Keratinocyte (primary cell): ENCODE measurements at regions of chr2 and their contacts with region 1.

Region 1: DNA sequence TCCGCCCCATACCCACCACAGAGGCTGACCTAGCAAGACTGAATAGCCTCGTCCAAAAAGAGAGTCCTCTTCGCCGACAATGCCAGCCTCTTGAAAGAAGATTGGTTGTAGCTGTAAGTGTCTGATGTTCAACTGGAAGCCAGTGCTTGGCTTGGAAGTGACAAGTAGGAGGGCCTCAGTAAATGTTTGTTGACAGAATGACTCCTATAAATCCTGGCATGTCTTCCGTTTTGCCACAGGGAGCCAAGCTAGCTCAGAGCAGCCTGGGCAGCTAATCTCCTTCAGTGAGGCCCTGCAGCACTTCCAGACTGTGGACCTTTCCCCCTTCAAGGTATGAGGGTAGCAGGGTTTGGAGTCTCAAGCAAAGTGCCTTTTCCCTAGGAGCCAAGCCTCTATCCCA is 14.9 kb downstream of the ELMOD3 start:
- DNase-seq: no peak
- H3K4me3 ChIP-seq: no peak overlapping the region
- H3K27ac ChIP-seq: no peak overlapping the region
- H3K4me1 ChIP-seq: no peaks in the 10 kb centered on the region
- H3K27me3 ChIP-seq: no peaks in the 10 kb centered on the region
- CTCF ChIP-seq: no peak

Region 2: GRCh38 chr2:85076618-85077274 is 292.8 kb before region 1 on chr2:
- dilution Hi-C with region 1: no loop called
- DNase-seq: no peak
- H3K4me3 ChIP-seq: no peak overlapping the region
- H3K27ac ChIP-seq: no peak overlapping the region
- H3K4me1 ChIP-seq: no peaks in the 10 kb centered on the region
- H3K27me3 ChIP-seq: peaks cover 4% of the 10 kb centered on the region
- CTCF ChIP-seq: no peak

Region 3: GRCh38 chr2:85318222-85319074 is 51.1 kb before region 1 on chr2:
- dilution Hi-C with region 1: loop called (anchors 10 kb)
- DNase-seq: no peak
- H3K4me3 ChIP-seq: no peak overlapping the region
- H3K27ac ChIP-seq: no peak overlapping the region
- H3K4me1 ChIP-seq: no peaks in the 10 kb centered on the region
- H3K27me3 ChIP-seq: no peaks in the 10 kb centered on the region
- CTCF ChIP-seq: no peak